ENCODE measurements at regions of chr11 and their contacts with region 1.

Region 1: DNA sequence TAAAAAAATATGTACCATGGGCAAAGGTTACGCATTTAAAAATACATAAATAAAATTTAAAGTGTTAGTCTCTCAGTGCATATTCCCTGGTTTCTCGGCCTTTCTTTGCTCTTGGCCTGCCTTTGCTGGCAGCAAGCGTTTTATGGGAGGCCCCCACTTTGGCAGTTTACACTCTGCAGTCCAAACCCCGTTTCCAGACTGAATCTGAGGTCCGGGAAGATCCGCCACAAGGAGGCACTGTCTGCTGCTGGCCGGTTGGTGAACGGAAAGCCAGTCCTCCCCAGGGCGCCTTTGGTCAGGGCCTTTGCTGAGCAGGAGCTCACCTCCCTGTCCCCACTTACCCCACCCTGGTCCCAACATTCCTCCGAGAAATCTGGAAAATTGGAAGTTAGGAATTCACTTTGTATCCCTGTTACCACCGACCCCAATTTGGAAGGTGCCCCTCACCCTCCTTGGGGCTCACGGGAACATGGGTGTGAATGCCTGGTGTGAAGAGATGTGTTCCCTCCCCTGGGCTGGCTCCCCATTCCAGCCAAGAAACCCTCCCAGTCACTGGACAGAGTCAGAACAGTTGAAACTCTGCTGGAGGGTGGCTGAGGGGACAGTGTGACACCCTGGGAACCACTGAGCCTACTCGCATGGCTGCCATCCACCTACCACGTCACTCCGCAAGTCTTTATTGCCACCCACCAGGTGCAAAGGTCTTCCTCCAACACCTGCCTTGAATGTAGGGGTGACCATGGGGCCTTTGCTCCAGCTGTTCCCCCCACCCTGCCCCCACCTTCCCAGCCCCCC is 9.4 kb upstream of the SF1 start:
- DNase-seq: peak; percentile 44 to 78 (median 58)
- ATAC-seq: peak; percentile 88
- H3K4me3 ChIP-seq: no peak overlapping the region
- H3K4me3 Mint-ChIP-seq: no peak overlapping the region
- H3K27ac ChIP-seq: no peak overlapping the region
- H3K27ac Mint-ChIP-seq: peak overlapping the region; percentile 69
- H3K4me1 ChIP-seq: peaks cover 13% of the 10 kb centered on the region
- H3K4me1 Mint-ChIP-seq: peaks cover 12% of the 10 kb centered on the region
- H3K27me3 ChIP-seq: no peaks in the 10 kb centered on the region
- H3K27me3 Mint-ChIP-seq: no peaks in the 10 kb centered on the region
- CTCF ChIP-seq: peak; percentile 82

Region 2: GRCh38 chr11:64703048-64703447 is 84.7 kb before region 1 on chr11:
- CTCF ChIA-PET with region 1: no interaction called
- POLR2A ChIA-PET with region 1: no interaction called
- intact Hi-C with region 1: no loop called
- DNase-seq: no peak
- ATAC-seq: no peak
- H3K4me3 ChIP-seq: no peak overlapping the region
- H3K4me3 Mint-ChIP-seq: no peak overlapping the region
- H3K27ac ChIP-seq: no peak overlapping the region
- H3K27ac Mint-ChIP-seq: no peak overlapping the region
- H3K4me1 ChIP-seq: no peaks in the 10 kb centered on the region
- H3K4me1 Mint-ChIP-seq: no peaks in the 10 kb centered on the region
- H3K27me3 ChIP-seq: peaks cover 0 to 7% of the 10 kb centered on the region in 2 experiments
- H3K27me3 Mint-ChIP-seq: peaks cover 30% of the 10 kb centered on the region
- CTCF ChIP-seq: no peak

Region 3: DNA sequence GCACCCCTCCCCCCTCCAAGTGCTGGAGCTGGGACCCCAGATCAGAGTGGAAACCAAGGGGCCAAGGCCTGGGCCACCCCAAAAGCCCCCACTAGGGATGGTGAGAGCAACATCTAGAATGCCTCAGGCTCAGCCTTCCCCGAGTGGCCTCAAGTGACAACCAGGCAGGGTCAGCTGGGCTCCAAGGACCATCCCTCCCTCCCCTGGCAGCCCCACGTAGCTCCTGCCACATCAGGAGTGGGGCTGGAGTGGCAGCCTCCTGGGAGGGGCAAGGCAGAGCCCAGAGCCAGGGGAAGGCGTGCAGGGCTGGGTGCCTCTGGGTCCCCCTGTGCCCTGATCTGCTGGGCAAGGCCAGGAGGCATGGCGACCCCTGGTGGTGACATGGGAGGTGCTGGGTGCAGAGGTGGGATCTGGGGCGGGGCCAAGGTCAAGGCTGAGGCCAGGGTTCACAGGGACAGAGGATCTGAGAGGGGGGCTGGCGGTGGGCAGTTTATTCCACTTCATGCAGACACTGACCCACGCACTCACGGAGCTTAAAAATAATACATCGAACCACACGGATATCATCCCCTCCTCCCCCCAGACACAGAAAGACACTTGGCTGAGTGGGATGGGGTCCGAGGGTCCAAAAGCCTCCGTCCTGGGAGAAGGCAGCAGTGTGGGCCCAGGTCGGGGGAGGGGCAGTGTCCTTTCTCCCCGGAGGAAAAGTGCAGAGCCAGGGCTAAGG is 106.5 kb after region 1 on chr11:
- CTCF ChIA-PET with region 1: no interaction called
- POLR2A ChIA-PET with region 1: no interaction called
- intact Hi-C with region 1: loop called (anchors 5 to 10 kb)
- DNase-seq: peak; percentile 86 to 96 (median 91)
- ATAC-seq: peak; percentile 87
- H3K4me3 ChIP-seq: no peak overlapping the region
- H3K4me3 Mint-ChIP-seq: peak overlapping the region; percentile 15
- H3K27ac ChIP-seq: no peak overlapping the region
- H3K27ac Mint-ChIP-seq: peak overlapping the region; percentile 59
- H3K4me1 ChIP-seq: peaks cover 12% of the 10 kb centered on the region
- H3K4me1 Mint-ChIP-seq: no peaks in the 10 kb centered on the region
- H3K27me3 ChIP-seq: no peaks in the 10 kb centered on the region
- H3K27me3 Mint-ChIP-seq: no peaks in the 10 kb centered on the region
- CTCF ChIP-seq: peak; percentile 81